ENCODE measurements at regions of chr4 and their contacts with region 1.

Region 1: DNA sequence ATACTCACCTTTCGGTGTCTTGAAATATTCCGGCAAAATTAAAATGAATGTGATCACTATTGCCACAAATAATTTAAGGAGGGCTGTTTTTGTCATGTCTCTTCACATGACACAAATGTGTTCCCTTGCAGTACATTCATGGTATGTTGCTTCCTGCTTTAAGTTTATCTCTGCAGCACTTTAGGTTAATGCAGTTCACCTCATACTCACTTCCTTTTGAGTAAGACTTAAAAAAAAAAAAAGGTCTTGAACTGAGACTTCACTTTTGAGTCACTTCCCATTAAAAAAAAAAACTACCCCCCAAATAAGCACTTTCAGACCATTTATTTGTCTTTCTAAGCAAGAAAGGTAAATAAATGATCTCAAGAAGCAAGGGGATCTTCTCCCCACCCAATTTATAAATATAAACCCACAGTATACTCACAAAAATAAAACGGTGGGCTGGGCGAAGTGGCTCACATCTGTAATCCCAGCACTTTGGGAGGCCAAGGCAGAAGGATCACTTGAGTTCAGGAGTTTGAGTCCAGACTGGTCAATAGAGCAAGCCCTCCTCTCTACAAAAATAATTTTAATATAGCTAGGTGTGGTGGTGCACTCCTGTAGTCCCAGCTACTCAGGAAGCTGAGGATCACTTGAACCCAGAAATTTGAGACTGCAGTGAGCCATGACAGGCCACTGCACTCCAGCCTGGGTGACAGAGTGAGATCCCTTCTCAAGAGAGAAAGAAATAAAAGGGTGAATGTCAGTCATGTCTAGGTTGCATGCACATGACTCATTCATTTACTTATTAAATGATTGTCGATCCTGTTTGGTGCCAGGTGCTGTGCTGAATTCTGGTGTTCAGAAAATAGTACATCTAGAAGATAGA is at the start of gene TMEM156:
- DNase-seq: peak; percentile 82
- ATAC-seq: peak; percentile 70
- H3K4me3 ChIP-seq: peak within 1 kb of the TSS; percentile 79
- H3K27ac ChIP-seq: peak within 1 kb of the TSS; percentile 88
- H3K4me1 ChIP-seq: peaks cover 28% of the 10 kb centered on the region
- H3K27me3 ChIP-seq: no peaks in the 10 kb centered on the region
- CTCF ChIP-seq: no peak
- EP300 ChIP-seq: peak; percentile 56 to 90; a peak in 2 of 4 replicates
- POLR2A ChIP-seq: peak; percentile 39; the same call in 1 of the 2 replicates
- RAD21 ChIP-seq: no peak
- polyA plus RNA-seq, gene TMEM156: 35.0 to 36.2 TPM

Region 2: GRCh38 chr4:38939165-38939564 is 93.3 kb before region 1 on chr4:
- CTCF ChIA-PET with region 1: no interaction called
- POLR2A ChIA-PET with region 1: no interaction called
- RAD21 ChIA-PET with region 1: interaction called, 3 read pairs
- SMC1A ChIA-PET with region 1: interaction called, 3 read pairs
- in situ Hi-C with region 1: no loop called
- intact Hi-C with region 1: loop called (anchors 5 kb)
- DNase-seq: peak; percentile 68
- ATAC-seq: peak; percentile 95
- H3K4me3 ChIP-seq: no peak overlapping the region
- H3K27ac ChIP-seq: no peak overlapping the region; the same call in 1 of the 2 replicates
- H3K4me1 ChIP-seq: peaks cover 20% of the 10 kb centered on the region
- H3K27me3 ChIP-seq: no peaks in the 10 kb centered on the region
- CTCF ChIP-seq: no peak
- EP300 ChIP-seq: peak; percentile 58 to 89; a peak in 2 of 4 replicates
- POLR2A ChIP-seq: no peak
- RAD21 ChIP-seq: no peak

Region 3: GRCh38 chr4:38980903-38981676 is 51.4 kb before region 1 on chr4:
- CTCF ChIA-PET with region 1: interaction called, 4 read pairs
- POLR2A ChIA-PET with region 1: interaction called, 6 read pairs
- RAD21 ChIA-PET with region 1: interaction called, 32 read pairs
- SMC1A ChIA-PET with region 1: interaction called, 10 read pairs
- in situ Hi-C with region 1: no loop called
- intact Hi-C with region 1: loop called (anchors 2 kb)
- DNase-seq: peak; percentile 24
- ATAC-seq: peak; percentile 82
- H3K4me3 ChIP-seq: no peak overlapping the region
- H3K27ac ChIP-seq: peak overlapping the region; percentile 52
- H3K4me1 ChIP-seq: peaks cover 19% of the 10 kb centered on the region
- H3K27me3 ChIP-seq: no peaks in the 10 kb centered on the region
- CTCF ChIP-seq: no peak
- EP300 ChIP-seq: no peak
- POLR2A ChIP-seq: no peak
- RAD21 ChIP-seq: no peak

Region 4: GRCh38 chr4:39044364-39044955 is 12.0 kb after region 1 on chr4:
- CTCF ChIA-PET with region 1: interaction called, 90 read pairs
- POLR2A ChIA-PET with region 1: interaction called, 131 read pairs
- RAD21 ChIA-PET with region 1: interaction called, 164 read pairs
- SMC1A ChIA-PET with region 1: interaction called, 163 read pairs
- in situ Hi-C with region 1: no loop called
- intact Hi-C with region 1: loop called (anchors 2 kb)
- DNase-seq: peak; percentile 90
- ATAC-seq: peak; percentile 83
- H3K4me3 ChIP-seq: peak overlapping the region; percentile 83
- H3K27ac ChIP-seq: peak overlapping the region; percentile 81
- H3K4me1 ChIP-seq: peaks cover 14% of the 10 kb centered on the region
- H3K27me3 ChIP-seq: no peaks in the 10 kb centered on the region
- CTCF ChIP-seq: peak in 1 of 3 experiments; percentile 23; a peak in 1 of 6 replicates
- EP300 ChIP-seq: peak in 1 of 2 experiments; percentile 52; a peak in 1 of 4 replicates
- POLR2A ChIP-seq: peak; percentile 74
- RAD21 ChIP-seq: no peak

Region 5: GRCh38 chr4:39051454-39051853 is 19.0 kb after region 1 on chr4:
- CTCF ChIA-PET with region 1: interaction called, 90 read pairs
- POLR2A ChIA-PET with region 1: interaction called, 131 read pairs
- RAD21 ChIA-PET with region 1: interaction called, 164 read pairs
- SMC1A ChIA-PET with region 1: interaction called, 163 read pairs
- in situ Hi-C with region 1: no loop called
- intact Hi-C with region 1: no loop called
- DNase-seq: no peak
- ATAC-seq: no peak
- H3K4me3 ChIP-seq: no peak overlapping the region
- H3K27ac ChIP-seq: no peak overlapping the region
- H3K4me1 ChIP-seq: peaks cover 8% of the 10 kb centered on the region
- H3K27me3 ChIP-seq: no peaks in the 10 kb centered on the region
- CTCF ChIP-seq: no peak
- EP300 ChIP-seq: no peak
- POLR2A ChIP-seq: no peak
- RAD21 ChIP-seq: no peak

Region 6: DNA sequence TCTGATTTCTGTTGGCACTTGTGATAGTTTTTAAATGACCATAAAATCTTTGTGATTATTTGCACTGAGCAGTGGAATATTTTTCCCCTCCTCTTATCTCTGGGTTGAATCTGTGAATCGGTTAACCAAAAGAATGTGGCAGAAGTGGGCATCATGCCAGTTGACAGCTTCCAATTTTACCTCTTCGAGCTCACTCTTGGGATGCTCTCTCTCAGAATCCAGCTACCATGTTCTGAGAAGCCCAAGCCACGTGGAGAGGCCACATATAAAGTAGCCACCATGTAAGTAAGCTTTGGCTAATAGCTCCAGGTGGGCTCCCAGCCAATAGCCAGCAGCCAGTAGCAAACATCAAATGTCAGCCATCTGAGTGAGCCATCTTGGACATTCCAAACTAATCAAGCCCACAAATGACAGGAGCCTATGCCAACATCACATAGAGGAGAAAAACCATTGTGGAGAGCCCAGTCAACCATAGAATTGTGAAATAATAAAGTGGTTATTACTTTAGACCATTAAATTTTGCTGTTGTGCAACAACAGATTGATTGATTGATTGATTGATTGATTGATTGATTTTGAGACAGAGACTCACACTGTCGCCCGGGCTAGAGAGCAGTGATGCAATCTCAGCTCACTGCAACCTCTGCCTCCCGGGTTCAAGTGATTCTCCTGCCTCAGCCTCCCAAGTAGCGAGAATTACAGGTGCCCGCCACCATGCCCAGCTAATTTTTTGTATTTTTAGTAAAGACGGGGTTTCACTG is 137.2 kb after region 1 on chr4:
- CTCF ChIA-PET with region 1: no interaction called
- POLR2A ChIA-PET with region 1: no interaction called
- RAD21 ChIA-PET with region 1: no interaction called
- SMC1A ChIA-PET with region 1: no interaction called
- in situ Hi-C with region 1: no loop called
- intact Hi-C with region 1: no loop called
- DNase-seq: no peak
- ATAC-seq: no peak
- H3K4me3 ChIP-seq: no peak overlapping the region
- H3K27ac ChIP-seq: no peak overlapping the region
- H3K4me1 ChIP-seq: peaks cover 12% of the 10 kb centered on the region
- H3K27me3 ChIP-seq: no peaks in the 10 kb centered on the region
- CTCF ChIP-seq: no peak
- EP300 ChIP-seq: no peak
- POLR2A ChIP-seq: no peak
- RAD21 ChIP-seq: no peak

Region 7: GRCh38 chr4:39621582-39621981 is 589.1 kb after region 1 on chr4:
- CTCF ChIA-PET with region 1: no interaction called
- POLR2A ChIA-PET with region 1: no interaction called
- RAD21 ChIA-PET with region 1: no interaction called
- SMC1A ChIA-PET with region 1: no interaction called
- in situ Hi-C with region 1: loop called (anchors 10 kb)
- intact Hi-C with region 1: no loop called
- DNase-seq: no peak
- ATAC-seq: no peak
- H3K4me3 ChIP-seq: no peak overlapping the region
- H3K27ac ChIP-seq: no peak overlapping the region
- H3K4me1 ChIP-seq: peaks cover 38% of the 10 kb centered on the region
- H3K27me3 ChIP-seq: no peaks in the 10 kb centered on the region
- CTCF ChIP-seq: no peak
- EP300 ChIP-seq: no peak
- POLR2A ChIP-seq: no peak
- RAD21 ChIP-seq: no peak